AG04449 (cell line): ENCODE measurements at regions of chr15 and their contacts with region 1.

Region 1: GRCh38 chr15:89017370-89018066 is 70.7 kb upstream of the ABHD2 start:
- DNase-seq: peak; percentile 69
- H3K4me3 ChIP-seq: peak overlapping the region; percentile 45
- CTCF ChIP-seq: peak; percentile 82

Region 2: GRCh38 chr15:88890495-88890894 is 127.0 kb before region 1 on chr15:
- CTCF ChIA-PET with region 1: interaction called, 14 read pairs
- POLR2A ChIA-PET with region 1: no interaction called
- DNase-seq: no peak
- H3K4me3 ChIP-seq: no peak overlapping the region
- CTCF ChIP-seq: no peak

Region 3: DNA sequence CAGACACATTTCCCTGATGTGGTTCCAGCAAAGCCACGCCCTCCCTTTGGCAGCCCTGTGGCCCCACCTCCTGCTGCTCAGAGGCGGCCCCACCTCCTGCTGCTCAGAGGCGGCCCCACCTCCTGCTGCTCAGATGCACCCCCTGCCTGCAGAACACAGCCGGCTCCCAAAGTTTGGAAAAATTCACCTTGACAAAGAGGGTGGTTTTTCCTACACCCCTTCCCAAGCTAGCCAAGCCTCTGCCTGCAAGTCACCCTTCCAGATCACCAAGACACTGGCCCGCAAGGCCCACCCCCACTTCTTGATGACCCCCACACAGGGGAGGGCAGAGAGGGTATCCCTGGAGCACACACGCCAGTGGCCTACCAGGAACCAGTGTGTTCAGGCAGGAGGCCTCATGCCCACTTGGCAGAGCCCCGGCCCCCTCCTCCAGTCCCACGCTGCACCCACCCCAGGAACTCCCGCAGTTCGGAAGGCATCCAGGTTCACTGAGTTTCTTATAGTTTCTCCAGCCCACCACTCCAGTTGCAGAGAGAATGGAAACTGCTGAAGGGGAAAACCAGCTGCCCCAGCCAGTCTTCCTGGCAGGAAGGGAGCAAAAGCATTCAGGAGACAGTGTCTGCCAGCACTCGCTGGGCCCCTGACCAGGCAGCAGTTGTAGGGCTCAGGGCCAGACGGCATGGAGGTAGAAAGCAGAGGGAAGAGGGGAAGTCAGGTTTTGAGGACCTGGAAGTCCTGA is 119.9 kb before region 1 on chr15:
- CTCF ChIA-PET with region 1: interaction called, 148 read pairs
- POLR2A ChIA-PET with region 1: interaction called, 3 read pairs
- DNase-seq: no peak
- H3K4me3 ChIP-seq: no peak overlapping the region
- CTCF ChIP-seq: peak; percentile 65

Region 4: DNA sequence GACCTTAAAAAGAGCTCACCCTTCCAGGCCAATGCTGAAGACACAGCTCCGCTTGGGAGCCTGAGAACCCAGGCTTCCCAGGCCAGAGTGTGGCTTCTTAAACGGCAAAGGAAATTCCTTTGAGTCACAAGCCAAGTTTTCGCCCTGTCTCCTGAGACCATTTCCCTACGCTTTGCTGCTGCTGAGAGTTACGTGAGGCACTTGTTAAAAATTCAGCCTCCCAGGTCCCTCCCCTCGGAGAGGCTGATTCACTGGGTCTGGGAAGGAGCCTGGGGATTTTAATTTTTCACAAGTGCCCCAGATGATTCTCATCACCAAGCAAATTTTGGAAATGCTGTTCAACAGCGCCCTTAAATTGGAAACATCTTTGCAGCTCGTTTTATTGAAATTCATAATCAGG is 178.3 kb after region 1 on chr15:
- CTCF ChIA-PET with region 1: no interaction called
- POLR2A ChIA-PET with region 1: no interaction called
- DNase-seq: no peak
- H3K4me3 ChIP-seq: no peak overlapping the region
- CTCF ChIP-seq: no peak